HepG2 (cell line): ENCODE measurements at regions of chr19 and their contacts with region 1.

Region 1: GRCh38 chr19:34489175-34489574 is 7.6 kb downstream of the WTIP start:
- DNase-seq: no peak
- ATAC-seq: no peak
- H3K4me3 ChIP-seq: no peak overlapping the region
- H3K27ac ChIP-seq: no peak overlapping the region
- H3K4me1 ChIP-seq: peaks cover 3% of the 10 kb centered on the region; the same call in 1 of the 2 replicates
- H3K27me3 ChIP-seq: no peaks in the 10 kb centered on the region
- CTCF ChIP-seq: no peak
- EP300 ChIP-seq: no peak
- POLR2A ChIP-seq: no peak
- RAD21 ChIP-seq: no peak

Region 2: DNA sequence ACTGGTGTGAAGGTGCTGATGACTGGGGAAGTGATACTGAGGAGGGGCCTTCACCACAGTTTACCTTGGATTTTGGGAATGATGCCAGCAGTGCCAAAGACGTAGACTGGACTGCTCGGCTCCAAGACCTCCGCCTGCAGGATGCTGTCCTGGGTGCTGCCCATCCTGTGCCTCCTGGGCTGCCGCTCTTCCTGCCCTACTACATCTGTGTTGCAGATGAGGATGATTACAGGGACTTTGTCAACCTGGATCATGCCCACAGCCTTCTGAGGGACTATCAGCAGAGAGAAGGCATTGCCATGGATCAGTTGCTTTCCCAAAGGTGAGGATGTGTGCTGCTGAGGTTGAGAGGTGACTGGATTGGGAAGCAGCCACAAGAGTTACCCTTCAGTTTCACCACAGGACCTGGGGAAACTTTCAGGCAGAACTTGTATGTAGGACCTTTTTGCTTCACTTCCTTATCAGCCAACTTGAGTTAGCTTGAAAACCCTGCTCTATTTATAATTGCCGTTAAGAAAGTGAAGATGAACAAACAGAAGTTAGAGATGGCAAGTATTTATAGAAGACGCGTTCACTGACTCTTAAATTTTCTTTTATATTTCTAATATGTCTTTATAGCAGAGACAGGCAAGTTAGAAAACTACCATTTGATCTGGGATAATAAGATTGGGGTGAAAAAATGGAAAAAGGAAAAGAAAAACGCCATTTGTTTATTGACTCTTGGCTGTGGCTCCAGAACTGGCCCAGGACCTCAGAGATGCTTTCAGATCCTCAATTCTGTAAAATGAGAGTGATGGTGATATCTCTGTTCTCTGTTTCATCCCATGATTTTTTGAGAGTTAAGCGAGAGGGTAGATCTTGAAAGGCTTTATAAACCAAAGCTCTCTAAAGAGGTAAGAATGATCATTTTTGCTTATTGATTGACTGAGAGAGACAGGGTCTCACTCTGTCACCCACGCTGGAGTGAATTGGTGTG is 79.7 kb before region 1 on chr19:
- CTCF ChIA-PET with region 1: no interaction called
- POLR2A ChIA-PET with region 1: no interaction called
- in situ Hi-C with region 1: no loop called
- intact Hi-C with region 1: loop called (anchors 2 kb)
- DNase-seq: no peak
- ATAC-seq: no peak
- H3K4me3 ChIP-seq: no peak overlapping the region
- H3K27ac ChIP-seq: no peak overlapping the region
- H3K4me1 ChIP-seq: peaks cover 23% of the 10 kb centered on the region
- H3K27me3 ChIP-seq: no peaks in the 10 kb centered on the region
- CTCF ChIP-seq: no peak
- EP300 ChIP-seq: no peak
- POLR2A ChIP-seq: no peak
- RAD21 ChIP-seq: no peak